ENCODE measurements at regions of chr11 and their contacts with region 1.

Region 1: DNA sequence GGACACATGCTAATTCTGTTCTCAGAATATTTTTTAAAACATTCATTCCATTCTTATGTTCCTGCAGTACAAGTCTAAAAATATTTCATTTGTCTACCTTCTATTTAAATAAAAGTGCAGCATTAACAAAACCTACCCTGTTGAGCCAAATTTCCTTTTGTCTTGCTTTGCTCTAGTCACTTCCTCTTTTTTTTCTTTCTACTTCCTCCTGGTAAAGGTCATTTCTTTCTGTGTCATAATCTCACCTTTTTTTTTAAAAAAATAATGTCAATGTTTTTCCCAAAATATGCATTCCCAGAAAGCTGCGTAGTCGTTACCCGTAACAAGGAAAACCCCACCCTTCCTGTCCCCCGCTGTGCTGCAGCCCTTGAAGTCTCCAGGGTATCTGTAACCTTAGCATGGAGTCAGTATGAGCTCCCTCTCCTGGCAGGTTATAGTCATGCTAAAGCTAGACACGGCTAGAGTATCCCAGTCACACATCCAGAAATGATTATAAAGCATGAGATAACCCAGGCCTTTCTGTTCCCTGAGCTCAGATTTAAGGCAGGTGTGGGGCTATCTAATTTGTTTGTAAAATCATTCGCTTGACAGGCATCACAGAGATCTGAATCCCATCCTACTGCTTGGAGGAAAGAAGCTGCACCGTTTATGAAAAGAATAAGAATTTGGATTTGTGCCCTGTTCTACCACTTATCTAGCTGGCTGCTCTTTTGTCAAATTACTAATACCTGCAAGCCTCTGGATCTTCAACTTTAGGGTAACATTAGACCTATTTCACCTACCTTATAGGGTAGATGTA is 51.1 kb upstream of the EED start:
- DNase-seq: no peak
- H3K4me3 ChIP-seq: no peak overlapping the region; the same call in 1 of the 2 replicates
- CTCF ChIP-seq: peak; percentile 72

Region 2: GRCh38 chr11:86035164-86035563 is 158.3 kb before region 1 on chr11:
- CTCF ChIA-PET with region 1: interaction called, 73 read pairs
- POLR2A ChIA-PET with region 1: no interaction called
- DNase-seq: no peak
- H3K4me3 ChIP-seq: no peak overlapping the region
- CTCF ChIP-seq: no peak

Region 3: DNA sequence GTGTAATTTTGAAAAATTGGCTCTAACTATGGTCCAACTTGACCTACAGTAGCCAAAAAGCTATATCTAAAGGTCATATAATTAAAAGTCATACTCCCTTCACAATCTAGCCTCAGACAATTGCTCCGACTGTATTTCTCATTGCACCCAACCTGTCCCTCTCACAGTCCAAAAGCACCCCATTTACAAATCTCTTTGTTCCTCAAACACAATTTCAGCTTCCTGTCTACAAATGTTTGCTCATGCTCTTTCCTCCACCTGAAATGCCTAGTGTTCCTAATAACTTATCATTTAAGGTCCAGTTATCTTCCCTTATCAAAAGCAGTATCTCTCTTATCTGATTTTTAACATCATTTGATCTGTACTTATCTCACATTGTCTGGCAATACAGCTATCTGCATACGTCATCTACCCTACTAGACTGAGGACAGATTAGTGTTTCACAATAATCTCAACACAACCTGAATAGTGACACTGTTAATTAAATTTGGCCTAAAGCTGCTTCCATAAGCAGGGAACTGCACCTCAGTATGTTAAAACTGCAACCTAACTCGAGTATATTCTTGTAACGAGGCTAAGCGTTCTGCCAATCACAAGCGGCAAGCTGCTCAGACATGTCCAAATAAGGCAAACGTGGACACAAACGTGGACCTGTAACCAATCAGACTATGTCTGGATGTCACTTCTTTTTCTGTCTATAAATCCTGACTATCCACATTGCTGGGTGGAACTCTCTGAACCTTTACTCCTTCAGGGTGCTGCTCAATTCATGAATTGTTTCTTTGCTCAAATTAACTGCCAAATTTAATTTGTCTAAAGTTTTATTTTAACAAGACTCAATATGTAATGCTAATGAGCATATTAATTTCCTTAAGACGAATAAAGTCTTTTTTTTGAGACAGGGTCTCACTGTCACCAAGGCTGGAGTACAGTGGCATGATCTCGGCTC is 140.5 kb before region 1 on chr11:
- CTCF ChIA-PET with region 1: interaction called, 21 read pairs
- POLR2A ChIA-PET with region 1: no interaction called
- DNase-seq: no peak
- H3K4me3 ChIP-seq: no peak overlapping the region
- CTCF ChIP-seq: no peak

Region 4: DNA sequence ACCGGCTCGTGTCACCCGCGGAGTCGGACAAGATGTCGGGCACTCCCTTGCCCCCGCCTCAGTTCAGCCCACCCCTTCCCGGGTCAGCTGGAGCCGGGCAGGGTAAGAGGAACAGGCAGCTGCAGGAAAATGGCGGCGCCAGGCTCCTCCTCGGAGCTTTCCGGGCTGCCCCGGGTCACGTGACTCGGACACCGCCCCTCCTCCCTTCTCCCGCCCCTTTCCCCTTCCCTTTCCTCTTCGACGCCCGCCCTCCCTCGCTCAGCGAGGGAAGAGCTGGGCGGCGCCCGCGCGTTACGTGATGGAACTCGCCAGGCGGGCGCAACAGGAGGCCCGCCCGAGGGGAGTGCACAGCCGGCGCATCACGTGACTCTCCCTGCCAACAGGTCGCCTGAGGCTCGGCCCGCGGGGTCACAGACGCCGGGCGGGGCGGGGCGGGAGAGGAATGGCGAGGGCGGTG is 124.5 kb before region 1 on chr11 and contains the start of gene PICALM:
- CTCF ChIA-PET with region 1: interaction called, 36 read pairs
- POLR2A ChIA-PET with region 1: interaction called, 5 read pairs
- DNase-seq: peak; percentile 93
- H3K4me3 ChIP-seq: peak within 1 kb of the TSS; percentile 94
- CTCF ChIP-seq: no peak

Region 5: GRCh38 chr11:86174101-86175046 is 19.1 kb before region 1 on chr11:
- CTCF ChIA-PET with region 1: interaction called, 17 read pairs
- POLR2A ChIA-PET with region 1: interaction called, 3 read pairs
- DNase-seq: peak; percentile 98
- H3K4me3 ChIP-seq: no peak overlapping the region
- CTCF ChIP-seq: no peak

Region 6: DNA sequence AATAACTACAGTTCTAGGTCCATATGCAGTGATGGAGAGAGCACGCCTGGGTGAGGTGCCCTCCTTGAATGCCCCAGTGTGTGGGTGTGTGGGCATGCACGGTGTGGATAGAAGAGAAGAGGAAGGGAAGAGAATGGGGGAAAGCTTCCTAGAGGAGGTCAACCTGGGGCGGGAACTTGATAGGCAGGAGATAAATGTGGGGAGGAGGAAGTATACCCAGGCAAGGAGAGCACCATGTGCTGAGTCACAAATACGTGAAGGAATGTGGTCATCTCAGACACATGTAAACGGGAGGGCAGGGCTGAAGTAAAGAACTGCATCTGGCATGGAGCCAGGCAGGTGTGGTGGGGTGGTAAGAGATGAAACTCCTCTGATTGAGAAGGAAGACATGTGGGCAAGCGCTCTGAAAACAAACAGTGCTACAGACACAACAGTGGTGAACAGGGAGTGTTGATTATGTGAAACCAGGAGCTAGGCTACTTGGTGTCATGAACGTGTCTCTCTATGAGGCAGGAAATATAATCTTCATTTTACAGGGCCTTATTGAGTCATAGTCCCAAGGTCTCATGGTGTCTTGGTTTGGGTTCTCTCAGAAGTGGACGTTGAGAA is 10.4 kb before region 1 on chr11:
- CTCF ChIA-PET with region 1: interaction called, 22 read pairs
- POLR2A ChIA-PET with region 1: no interaction called
- DNase-seq: no peak
- H3K4me3 ChIP-seq: no peak overlapping the region
- CTCF ChIP-seq: no peak

Region 7: GRCh38 chr11:86370922-86371594 is 177.6 kb after region 1 on chr11:
- CTCF ChIA-PET with region 1: no interaction called
- POLR2A ChIA-PET with region 1: no interaction called
- DNase-seq: peak; percentile 7
- H3K4me3 ChIP-seq: no peak overlapping the region
- CTCF ChIP-seq: no peak

Region 8: DNA sequence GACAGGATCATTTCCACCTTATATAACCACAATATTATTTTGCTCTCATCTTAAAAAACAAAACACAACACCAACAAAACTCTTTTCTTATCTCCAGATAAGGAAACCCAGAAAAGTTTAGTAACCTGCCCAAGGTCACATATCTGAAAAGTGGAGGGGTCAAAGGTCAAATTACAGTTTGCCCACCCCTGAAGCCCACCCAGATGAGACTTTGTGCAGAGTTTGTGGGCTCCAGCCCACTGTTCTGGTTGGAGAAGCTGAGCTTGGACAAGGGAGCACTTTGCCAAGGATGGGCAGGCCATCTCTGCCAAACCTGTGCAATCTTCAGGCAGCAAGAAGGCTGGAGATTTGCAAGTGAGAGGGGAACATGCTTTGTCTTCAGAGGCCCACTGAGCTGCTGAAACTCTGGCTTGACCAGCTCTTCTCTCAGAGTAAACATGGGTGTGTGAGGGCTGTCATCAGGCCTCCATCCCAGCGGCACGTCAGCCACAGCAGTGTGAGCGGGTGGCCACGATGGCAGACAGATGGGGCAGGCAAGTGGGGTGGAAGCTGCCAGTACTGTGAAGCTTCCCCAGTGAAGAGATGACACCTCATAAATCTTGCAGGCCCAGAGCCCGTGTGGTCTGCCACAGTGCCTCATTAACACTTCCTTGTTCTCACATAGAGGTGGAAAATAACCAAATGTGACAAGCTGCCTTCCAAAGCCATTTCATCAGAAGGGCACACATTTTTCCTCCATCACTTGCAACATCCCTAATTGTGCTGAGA is 292.9 kb after region 1 on chr11:
- CTCF ChIA-PET with region 1: no interaction called
- POLR2A ChIA-PET with region 1: no interaction called
- DNase-seq: no peak
- H3K4me3 ChIP-seq: no peak overlapping the region
- CTCF ChIP-seq: no peak